Transverse colon (tissue), 4 donors: ENCODE measurements at regions of chr6 and their contacts with region 1.

Region 1: GRCh38 chr6:112180095-112180820 is 74.1 kb downstream of the LAMA4 start:
- DNase-seq: peak; percentile 19
- H3K4me3 ChIP-seq: no peak overlapping the region
- H3K27ac ChIP-seq: no peak overlapping the region
- H3K4me1 ChIP-seq: peaks cover 0 to 9% (median 0%) of the 10 kb centered on the region in 4 donors
- H3K27me3 ChIP-seq: no peaks in the 10 kb centered on the region
- CTCF ChIP-seq: peak; percentile 61 to 68 (median 66)
- EP300 ChIP-seq: no peak
- POLR2A ChIP-seq: no peak

Region 2: DNA sequence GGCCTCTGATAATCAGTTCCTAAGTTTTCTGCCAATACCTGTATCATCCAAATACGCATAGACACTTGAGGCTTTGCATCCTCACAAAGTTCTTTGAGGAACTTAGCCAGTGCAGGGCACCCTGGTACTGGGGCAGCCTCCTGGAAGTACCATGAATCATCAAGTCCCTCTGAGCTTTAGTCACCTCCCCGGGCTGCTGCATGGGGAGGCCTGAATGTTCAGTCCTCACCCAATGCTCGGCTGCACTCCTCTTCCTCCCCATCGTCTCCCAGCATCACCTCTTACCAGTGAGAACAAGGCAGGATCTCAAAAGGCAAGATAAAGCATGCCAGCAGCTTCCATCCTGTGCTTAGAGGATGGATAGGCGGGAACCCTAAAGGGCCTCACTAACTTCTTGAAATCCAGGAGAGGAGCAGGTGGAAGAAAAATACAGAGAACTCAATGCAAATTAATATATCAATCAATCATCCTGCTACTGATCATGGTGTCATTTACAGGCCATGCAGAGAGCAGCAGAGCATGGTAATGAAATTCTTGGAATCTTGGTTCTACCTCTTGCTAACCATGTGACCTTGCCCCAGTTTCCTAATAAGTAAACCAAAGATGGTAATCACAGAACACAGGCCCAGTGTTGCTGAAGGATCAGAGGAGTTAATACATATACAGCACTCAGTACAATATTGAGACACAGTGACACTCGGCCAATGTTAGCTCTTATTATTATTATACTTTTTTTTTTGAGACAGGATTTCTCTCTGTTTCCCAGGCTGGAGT is 131.0 kb before region 1 on chr6:
- in situ Hi-C with region 1: no loop called
- intact Hi-C with region 1: no loop called
- DNase-seq: no peak
- H3K4me3 ChIP-seq: no peak overlapping the region
- H3K27ac ChIP-seq: no peak overlapping the region
- H3K4me1 ChIP-seq: peaks cover 0 to 7% (median 0%) of the 10 kb centered on the region in 4 donors
- H3K27me3 ChIP-seq: no peaks in the 10 kb centered on the region
- CTCF ChIP-seq: no peak
- EP300 ChIP-seq: no peak
- POLR2A ChIP-seq: no peak

Region 3: GRCh38 chr6:112311950-112312547 is 131.8 kb after region 1 on chr6:
- in situ Hi-C with region 1: loop called in 2 of 4 experiments (anchors 10 kb)
- intact Hi-C with region 1: loop called (anchors 2 kb)
- DNase-seq: no peak
- H3K4me3 ChIP-seq: no peak overlapping the region
- H3K27ac ChIP-seq: no peak overlapping the region
- H3K4me1 ChIP-seq: peaks cover 0 to 17% (median 0%) of the 10 kb centered on the region in 4 donors
- H3K27me3 ChIP-seq: no peaks in the 10 kb centered on the region
- CTCF ChIP-seq: peak; percentile 50 to 68 (median 62)
- EP300 ChIP-seq: no peak
- POLR2A ChIP-seq: no peak

Region 4: DNA sequence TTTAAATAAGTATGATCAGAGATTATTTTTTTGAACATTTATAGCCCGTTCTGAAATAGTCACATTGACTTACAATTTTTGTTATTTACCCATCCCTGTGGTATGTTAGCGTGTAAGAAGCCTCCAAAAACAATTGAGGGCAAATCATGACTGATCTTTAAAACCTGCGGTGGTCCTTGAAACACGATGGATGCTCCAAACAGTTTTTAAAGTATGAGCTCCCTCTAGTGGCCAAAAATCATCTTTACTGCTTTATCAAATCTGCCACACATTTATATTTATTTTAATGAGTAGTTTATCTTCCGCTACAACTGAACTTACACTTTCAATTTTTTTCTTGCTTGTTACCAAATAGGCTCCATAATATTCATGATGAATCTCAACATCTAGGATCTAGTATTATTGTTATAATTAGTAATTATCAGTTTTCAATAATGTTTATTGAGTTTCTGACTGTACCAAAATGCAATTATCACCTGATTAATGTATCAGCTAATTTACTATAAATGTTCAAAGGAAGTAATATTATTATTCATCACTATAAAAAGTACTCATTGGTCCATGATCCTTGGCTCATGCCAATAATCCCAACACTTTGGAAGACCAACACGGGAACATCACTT is 1729.1 kb after region 1 on chr6:
- in situ Hi-C with region 1: loop called in 2 of 4 experiments (anchors 25 kb)
- intact Hi-C with region 1: no loop called
- DNase-seq: no peak
- H3K4me3 ChIP-seq: no peak overlapping the region
- H3K27ac ChIP-seq: no peak overlapping the region
- H3K4me1 ChIP-seq: peaks cover 0 to 4% (median under 1%) of the 10 kb centered on the region in 4 donors
- H3K27me3 ChIP-seq: no peaks in the 10 kb centered on the region
- CTCF ChIP-seq: peak; percentile 70 to 81 (median 74)
- EP300 ChIP-seq: no peak
- POLR2A ChIP-seq: no peak